ENCODE measurements at regions of chr1 and their contacts with region 1.

Region 1: GRCh38 chr1:182084487-182085316 is 23.2 kb upstream of the ZNF648 start:
- DNase-seq: no peak
- H3K4me3 ChIP-seq: no peak overlapping the region
- H3K27ac ChIP-seq: no peak overlapping the region
- H3K27me3 ChIP-seq: no peaks in the 10 kb centered on the region
- CTCF ChIP-seq: peak; percentile 63

Region 2: DNA sequence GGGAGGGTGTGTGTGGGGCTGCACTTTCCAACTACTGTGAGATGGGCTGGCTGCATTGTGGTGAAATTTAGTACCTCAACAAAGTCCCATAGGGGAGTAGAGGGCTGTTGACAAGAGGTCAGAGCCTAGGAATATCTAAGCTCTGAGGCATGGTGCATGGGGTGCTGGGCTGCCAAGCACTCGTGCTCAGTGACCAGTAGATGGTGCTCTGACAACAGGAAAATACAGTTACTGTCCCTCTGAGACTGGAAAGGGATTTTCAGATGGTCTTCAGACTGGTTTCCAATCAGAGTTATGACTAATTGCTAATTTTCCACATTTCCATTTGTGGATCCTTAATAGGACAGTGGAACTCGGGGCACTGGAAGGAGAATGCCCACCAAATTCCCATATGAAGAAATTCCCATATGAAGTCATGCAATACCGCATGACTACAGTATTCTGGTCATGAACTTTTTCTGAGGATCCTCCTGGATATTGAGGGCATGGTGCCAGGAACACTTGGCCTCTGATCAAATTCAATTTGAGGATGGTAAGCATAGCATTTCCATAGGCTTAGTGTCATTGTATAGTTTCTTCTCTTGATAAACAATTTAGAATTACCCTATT is 605.5 kb before region 1 on chr1:
- CTCF ChIA-PET with region 1: interaction called, 35 read pairs
- POLR2A ChIA-PET with region 1: no interaction called
- DNase-seq: peak; percentile 27
- H3K4me3 ChIP-seq: no peak overlapping the region
- H3K27ac ChIP-seq: no peak overlapping the region
- H3K27me3 ChIP-seq: peaks cover 30% of the 10 kb centered on the region
- CTCF ChIP-seq: peak; percentile 76

Region 3: DNA sequence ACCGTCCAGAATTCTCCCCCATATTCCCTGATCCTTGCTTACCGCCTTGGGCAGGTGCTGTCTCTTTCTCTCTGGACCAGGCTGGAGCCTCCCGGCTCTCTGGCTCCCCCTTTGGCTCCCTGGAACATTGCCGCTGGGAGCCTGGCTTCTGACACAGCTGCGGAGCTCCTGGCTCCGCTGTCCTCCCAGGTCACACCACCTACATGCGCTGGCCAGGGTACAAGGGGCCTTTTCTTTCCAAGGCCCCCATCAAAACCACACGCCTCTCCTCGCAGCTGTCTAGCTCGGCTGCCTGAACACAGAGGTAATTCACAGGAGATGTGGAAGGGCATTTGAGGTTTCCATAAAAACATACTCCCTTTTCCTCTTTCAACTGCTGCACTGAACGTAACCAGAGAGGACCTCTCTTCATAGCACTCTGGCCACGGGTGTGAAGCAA is 15.7 kb before region 1 on chr1:
- CTCF ChIA-PET with region 1: interaction called, 10 read pairs
- POLR2A ChIA-PET with region 1: no interaction called
- DNase-seq: no peak
- H3K4me3 ChIP-seq: no peak overlapping the region
- H3K27ac ChIP-seq: no peak overlapping the region
- H3K27me3 ChIP-seq: no peaks in the 10 kb centered on the region
- CTCF ChIP-seq: peak; percentile 66

Region 4: GRCh38 chr1:182397771-182398393 is 313.2 kb after region 1 on chr1:
- CTCF ChIA-PET with region 1: interaction called, 31 read pairs
- POLR2A ChIA-PET with region 1: no interaction called
- DNase-seq: no peak
- H3K4me3 ChIP-seq: no peak overlapping the region
- H3K27ac ChIP-seq: no peak overlapping the region
- H3K27me3 ChIP-seq: no peaks in the 10 kb centered on the region
- CTCF ChIP-seq: no peak

Region 5: DNA sequence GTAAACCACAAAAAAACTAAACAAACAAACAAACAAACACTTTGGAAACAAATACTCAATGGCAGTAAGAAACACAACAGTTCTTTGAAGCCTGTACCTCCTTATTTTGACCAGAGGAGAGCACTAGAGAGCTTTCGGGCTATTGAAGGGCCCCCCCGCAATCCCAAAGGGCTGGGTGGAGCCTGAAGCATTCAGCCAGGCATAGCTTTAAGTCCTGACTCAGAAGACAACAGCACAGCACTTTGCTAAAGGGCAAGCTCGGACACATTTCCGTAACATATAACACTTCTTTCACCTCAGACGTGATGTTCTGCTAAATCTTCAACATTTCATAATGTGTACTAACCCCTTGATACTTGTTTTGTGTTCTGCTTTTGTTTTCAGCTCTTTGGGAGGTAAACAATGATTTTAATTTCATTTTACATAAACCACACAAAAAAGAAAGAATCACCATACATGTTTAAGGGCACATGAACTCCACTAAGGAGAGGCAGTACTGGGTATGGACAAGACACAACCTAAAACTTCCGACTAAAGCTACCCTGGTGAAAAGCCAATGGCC is 877.9 kb after region 1 on chr1:
- CTCF ChIA-PET with region 1: no interaction called
- POLR2A ChIA-PET with region 1: no interaction called
- DNase-seq: peak; percentile 76
- H3K4me3 ChIP-seq: peak overlapping the region; percentile 38; the same call in 1 of the 2 replicates
- H3K27ac ChIP-seq: no peak overlapping the region
- H3K27me3 ChIP-seq: no peaks in the 10 kb centered on the region
- CTCF ChIP-seq: peak; percentile 95

Measured in AG04450 (cell line).